ENCODE measurements at regions of chr2 and their contacts with region 1.

Region 1: DNA sequence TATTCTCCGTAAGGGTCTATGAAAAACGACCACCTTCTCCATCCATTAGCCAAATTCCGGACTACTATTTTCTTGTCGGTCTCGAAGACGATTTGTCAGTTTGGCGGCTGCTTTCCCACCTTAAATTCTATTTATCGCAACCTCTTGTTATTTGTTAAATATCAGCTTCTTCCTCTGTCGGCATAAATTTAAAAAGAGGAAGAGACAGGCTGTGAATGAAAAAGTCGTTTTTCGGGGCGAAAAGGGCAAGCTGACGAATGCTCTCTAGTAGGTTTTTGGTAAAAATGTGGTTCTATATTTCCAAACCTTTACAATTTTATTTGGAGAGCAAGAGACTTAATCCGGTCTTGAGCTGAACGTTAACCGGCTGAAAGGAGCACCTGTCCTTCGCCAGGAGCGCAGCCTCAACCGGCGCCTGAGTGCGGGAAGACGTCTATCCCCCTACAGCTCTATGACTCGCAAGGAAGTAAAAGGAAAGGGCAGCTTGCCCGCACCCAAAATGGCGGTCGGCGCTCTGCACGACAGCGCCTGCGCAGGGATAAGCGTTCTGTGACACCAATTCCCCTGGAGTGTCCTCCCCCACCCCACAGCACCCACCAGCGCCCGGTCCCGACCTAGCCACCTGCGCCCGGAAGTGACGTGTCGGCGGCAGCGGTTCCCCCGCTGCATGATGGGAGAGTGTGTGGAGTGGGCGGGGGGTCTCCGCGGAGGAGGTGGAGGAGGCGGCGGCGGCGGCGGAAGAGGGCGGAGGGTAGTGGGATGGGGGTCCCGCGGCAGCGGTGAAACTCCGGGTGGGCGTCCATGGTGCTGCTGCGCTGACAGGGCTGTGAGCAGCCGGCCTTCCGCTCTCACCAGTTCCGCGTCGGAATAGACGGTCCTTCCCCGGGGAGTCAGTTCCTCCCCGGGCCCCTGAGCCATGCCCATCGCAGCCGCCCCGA is at the start of gene AFTPH:
- DNase-seq: peak; percentile 100
- H3K4me3 ChIP-seq: peak within 1 kb of the TSS; percentile 93 to 98 (median 97)
- H3K27ac ChIP-seq: peak within 1 kb of the TSS; percentile 82
- H3K4me1 ChIP-seq: peaks cover 12% of the 10 kb centered on the region
- H3K27me3 ChIP-seq: peaks cover 7 to 8% of the 10 kb centered on the region in 2 experiments
- CTCF ChIP-seq: no peak
- POLR2A ChIP-seq: peak; percentile 46
- total RNA-seq, gene AFTPH: 15.3 and 16.7 TPM in 2 replicates

Region 2: DNA sequence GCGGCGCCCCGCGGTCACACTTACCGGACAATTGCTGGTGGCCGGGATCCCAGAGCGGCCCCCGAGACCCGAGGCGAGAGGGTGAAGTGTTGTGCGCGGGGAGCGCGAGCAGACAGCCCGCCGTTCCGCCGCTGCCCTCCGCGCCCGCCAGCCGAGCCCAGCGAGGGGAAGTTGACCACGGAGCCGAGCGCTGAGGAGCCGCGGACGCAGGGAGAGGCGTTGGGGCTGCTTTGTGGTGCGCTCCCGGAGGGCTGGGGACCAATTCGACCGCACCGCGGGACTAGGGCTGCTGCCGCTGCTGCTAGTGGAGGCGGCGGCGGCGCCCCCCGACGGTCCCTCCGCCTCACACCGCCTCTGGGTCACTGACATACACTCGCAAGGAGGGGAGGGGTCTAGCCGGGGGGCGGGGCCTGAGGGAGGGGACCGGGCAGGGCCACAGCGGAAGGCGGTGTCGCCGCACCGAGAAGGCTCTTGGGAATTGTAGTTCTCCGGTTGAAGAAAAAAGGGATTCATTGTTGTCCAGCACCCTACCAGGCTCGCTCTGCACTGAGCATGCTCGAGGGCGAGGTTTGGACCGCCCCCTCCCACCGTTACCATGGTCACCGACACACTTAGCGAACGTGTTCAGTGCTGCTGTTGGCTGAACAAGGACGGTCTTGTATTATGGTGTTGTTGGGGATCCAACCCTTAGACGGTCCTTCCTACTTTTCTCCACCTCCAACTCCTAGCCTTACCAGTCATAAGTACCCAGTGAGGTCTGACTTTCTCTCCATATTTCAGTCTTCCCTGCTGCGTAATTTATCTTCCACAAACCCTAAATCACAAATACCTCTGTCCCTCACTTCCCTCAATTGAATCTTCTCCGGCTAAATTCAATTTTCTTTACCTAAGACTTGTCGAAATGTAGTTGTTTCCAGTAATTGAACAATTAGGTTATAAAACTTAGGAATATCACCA is 379.6 kb before region 1 on chr2 and contains the start of gene PELI1:
- CTCF ChIA-PET with region 1: no interaction called
- POLR2A ChIA-PET with region 1: no interaction called
- dilution Hi-C with region 1: no loop called
- intact Hi-C with region 1: loop called (anchors 10 kb)
- DNase-seq: peak; percentile 99
- H3K4me3 ChIP-seq: peak within 1 kb of the TSS; percentile 70 to 90 (median 83)
- H3K27ac ChIP-seq: peak within 1 kb of the TSS; percentile 74
- H3K4me1 ChIP-seq: peaks cover 18% of the 10 kb centered on the region
- H3K27me3 ChIP-seq: peaks cover 0 to 4% of the 10 kb centered on the region in 2 experiments
- CTCF ChIP-seq: peak in 1 of 2 donors; percentile 34
- POLR2A ChIP-seq: peak; percentile 95
- total RNA-seq, gene PELI1: 30.9 and 39.9 TPM in 2 replicates

Region 3: GRCh38 chr2:64348386-64349130 is 175.4 kb before region 1 on chr2:
- CTCF ChIA-PET with region 1: no interaction called
- POLR2A ChIA-PET with region 1: no interaction called
- dilution Hi-C with region 1: no loop called
- intact Hi-C with region 1: no loop called
- DNase-seq: no peak
- H3K4me3 ChIP-seq: no peak overlapping the region
- H3K27ac ChIP-seq: no peak overlapping the region
- H3K4me1 ChIP-seq: no peaks in the 10 kb centered on the region
- H3K27me3 ChIP-seq: peaks cover 8 to 11% of the 10 kb centered on the region in 2 experiments
- CTCF ChIP-seq: no peak
- POLR2A ChIP-seq: no peak

Region 4: DNA sequence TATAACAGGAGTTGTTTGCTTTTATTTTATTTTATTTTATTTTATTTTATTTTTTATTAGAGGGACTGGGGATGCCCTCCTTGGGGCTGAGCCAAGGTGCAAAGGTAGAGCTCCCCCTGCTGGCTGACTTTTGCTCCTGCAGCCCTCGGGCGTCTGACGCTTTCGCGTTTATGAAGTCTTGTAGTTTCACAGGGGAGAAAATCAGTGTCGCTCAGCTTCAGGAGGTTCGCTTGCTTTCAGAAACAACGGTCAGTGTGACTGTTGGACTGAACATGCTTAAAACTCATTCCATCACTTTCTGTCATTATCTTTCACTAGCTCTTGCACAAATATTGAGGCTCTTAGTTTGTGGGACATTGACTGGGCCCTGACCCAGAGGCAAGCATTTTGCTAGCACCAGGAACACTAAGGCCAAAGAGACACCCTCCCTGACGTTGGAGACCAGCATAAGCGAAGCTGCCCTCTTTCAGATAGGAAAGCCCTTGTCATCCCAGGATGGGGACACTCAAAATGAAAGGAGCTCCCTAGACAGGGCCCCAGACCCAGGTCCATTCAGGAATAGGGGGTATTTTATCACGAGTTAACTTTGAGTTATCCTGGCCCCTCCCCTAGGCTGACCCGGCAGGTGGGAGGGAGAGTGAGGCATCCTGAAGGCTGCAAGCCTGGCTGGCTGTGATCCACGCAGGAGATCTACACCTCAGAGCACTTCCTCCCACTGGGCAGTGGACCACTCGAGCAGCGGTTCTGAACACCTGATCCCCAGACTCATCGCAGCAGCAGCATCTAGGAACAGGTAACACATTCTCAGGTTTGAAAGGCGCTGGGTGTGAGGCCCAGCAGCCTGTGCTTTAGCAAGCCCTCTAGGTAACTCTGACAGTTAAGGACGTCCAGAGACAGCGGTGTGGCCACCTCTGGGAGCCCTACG is 35.6 kb before region 1 on chr2:
- CTCF ChIA-PET with region 1: interaction called, 22 read pairs
- POLR2A ChIA-PET with region 1: no interaction called
- dilution Hi-C with region 1: no loop called
- intact Hi-C with region 1: loop called (anchors 2 kb)
- DNase-seq: peak; percentile 55
- H3K4me3 ChIP-seq: no peak overlapping the region
- H3K27ac ChIP-seq: no peak overlapping the region
- H3K4me1 ChIP-seq: peaks cover 31% of the 10 kb centered on the region
- H3K27me3 ChIP-seq: peaks cover 10 to 19% of the 10 kb centered on the region in 2 experiments
- CTCF ChIP-seq: peak; percentile 87 to 92
- POLR2A ChIP-seq: no peak

Region 5: DNA sequence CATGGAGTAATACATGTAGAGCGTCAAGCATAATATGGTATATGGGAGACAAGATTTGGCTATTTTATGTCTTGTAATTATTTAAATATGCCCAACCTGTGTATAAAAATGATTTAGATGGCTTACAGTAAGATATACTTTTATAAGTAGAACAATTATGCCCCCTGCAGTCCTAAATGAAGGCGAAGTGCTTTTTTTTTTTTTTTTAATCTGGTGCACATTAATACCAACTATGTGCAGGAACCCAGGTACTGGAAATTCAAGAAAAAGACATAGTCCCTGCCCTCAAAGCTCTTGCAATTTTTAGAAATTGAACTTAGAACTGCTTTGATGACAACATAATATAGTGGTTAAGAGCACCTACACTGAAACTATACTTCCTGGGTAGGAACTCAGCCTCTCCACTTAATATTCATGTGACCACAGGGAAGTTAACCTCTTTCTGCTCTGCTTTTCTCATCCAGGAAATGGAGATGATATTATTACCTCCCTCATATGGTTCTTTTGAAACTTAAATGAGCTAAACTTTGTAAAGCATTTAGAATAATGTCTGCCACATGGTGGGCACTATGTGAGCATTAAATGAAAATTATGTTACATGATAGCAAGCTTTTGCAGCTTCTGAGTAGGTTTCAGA is 38.3 kb after region 1 on chr2:
- CTCF ChIA-PET with region 1: interaction called, 41 read pairs
- POLR2A ChIA-PET with region 1: no interaction called
- dilution Hi-C with region 1: no loop called
- intact Hi-C with region 1: loop called (anchors 1 kb)
- DNase-seq: peak; percentile 57
- H3K4me3 ChIP-seq: no peak overlapping the region
- H3K27ac ChIP-seq: no peak overlapping the region
- H3K4me1 ChIP-seq: no peaks in the 10 kb centered on the region
- H3K27me3 ChIP-seq: no peaks in the 10 kb centered on the region
- CTCF ChIP-seq: peak; percentile 7 to 10
- POLR2A ChIP-seq: no peak

Region 6: DNA sequence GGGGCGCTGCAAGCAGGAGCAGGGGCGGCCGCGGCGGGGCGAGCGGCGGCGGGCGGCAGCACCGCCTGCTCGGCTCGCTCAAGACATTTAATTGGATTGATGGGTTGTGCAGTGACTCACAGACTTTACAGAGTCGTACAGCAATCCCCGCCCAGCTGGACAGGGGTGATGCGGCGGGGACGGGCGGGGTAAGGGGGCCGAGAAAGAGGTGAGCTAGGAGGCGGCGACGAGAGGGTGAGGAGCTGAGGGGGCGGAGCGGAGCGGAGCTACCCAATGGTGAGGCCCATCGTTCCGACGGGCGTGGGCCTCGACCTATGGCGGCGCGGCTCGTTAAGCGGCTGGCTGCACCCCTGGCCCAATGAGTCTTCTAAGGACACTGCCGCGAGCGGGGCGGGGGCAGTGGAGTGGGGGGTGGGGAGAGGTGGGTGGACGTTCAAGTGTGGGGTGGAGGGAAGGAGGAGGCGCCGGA is 226.9 kb after region 1 on chr2:
- CTCF ChIA-PET with region 1: no interaction called
- POLR2A ChIA-PET with region 1: no interaction called
- dilution Hi-C with region 1: no loop called
- intact Hi-C with region 1: loop called (anchors 2 kb)
- DNase-seq: peak; percentile 100
- H3K4me3 ChIP-seq: peak overlapping the region; percentile 74 to 96 (median 87)
- H3K27ac ChIP-seq: peak overlapping the region; percentile 83
- H3K4me1 ChIP-seq: peaks cover 17% of the 10 kb centered on the region
- H3K27me3 ChIP-seq: no peaks in the 10 kb centered on the region
- CTCF ChIP-seq: no peak
- POLR2A ChIP-seq: peak; percentile 95

Region 7: DNA sequence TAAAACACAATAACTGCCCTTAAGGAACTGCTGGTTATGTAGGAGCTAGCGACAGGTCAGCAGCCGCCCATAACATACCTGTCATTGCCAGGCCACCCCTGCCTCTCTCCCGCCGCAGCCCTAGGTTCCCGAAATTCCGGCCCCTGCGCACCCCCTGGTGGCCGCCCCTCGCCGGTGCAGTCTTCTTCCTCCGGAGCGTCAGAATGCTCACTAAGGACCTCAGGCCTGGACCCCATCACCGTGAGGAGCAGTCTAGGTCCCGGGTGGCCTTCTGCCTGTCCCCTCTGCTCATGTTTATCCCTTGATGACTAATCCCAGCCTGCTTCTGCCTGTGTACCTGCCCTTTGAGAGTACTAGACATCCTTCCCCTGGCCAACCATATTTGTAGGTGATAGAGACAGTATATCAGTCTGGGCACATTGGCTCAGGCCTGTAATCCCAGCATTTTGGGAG is 349.6 kb after region 1 on chr2:
- CTCF ChIA-PET with region 1: interaction called, 8 read pairs
- POLR2A ChIA-PET with region 1: no interaction called
- dilution Hi-C with region 1: no loop called
- intact Hi-C with region 1: loop called (anchors 1 kb)
- DNase-seq: peak; percentile 63
- H3K4me3 ChIP-seq: no peak overlapping the region
- H3K27ac ChIP-seq: no peak overlapping the region
- H3K4me1 ChIP-seq: peaks cover 10% of the 10 kb centered on the region
- H3K27me3 ChIP-seq: no peaks in the 10 kb centered on the region
- CTCF ChIP-seq: peak; percentile 95 to 96
- POLR2A ChIP-seq: no peak

Region 8: DNA sequence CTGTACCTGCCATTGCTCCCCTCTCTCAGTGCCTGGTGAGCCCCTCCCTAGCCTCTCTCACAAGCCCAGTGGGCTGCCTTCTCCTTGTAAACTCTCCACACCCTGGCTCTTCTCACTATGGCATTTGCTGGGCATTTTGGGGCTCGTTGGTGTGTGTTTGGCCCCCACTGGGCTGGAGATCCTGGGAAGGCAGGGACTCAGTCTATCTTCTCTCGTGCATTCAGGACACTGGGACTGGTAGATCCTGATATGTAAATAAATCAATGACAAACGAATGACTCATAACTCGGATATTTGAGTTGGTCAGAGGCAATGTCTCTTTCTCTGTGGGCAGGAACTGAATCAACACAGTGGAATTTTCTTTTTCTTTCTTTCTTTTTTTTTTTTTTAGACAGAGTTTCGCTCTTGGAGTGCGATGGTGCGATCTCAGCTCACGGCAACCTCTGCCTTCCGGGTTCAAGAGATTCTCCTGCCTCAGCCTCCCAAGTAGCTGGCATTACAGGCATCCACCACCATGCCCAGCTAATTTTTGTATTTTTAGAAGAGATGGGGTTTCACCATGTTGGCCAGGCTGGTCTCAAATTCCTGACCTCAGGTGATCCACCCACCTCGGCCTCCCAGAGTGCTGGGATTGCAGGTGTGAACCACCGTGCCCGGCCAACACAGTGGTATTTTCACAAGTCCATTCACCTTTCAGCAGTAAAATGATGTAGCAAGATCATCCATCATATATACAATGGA is 1053.1 kb after region 1 on chr2:
- CTCF ChIA-PET with region 1: no interaction called
- POLR2A ChIA-PET with region 1: no interaction called
- dilution Hi-C with region 1: no loop called
- intact Hi-C with region 1: loop called (anchors 5 kb)
- DNase-seq: peak; percentile 87
- H3K4me3 ChIP-seq: no peak overlapping the region
- H3K27ac ChIP-seq: peak overlapping the region; percentile 88
- H3K4me1 ChIP-seq: peaks cover 19% of the 10 kb centered on the region
- H3K27me3 ChIP-seq: no peaks in the 10 kb centered on the region
- CTCF ChIP-seq: no peak
- POLR2A ChIP-seq: no peak